ENCODE measurements at regions of chr19 and their contacts with region 1.

Region 1: DNA sequence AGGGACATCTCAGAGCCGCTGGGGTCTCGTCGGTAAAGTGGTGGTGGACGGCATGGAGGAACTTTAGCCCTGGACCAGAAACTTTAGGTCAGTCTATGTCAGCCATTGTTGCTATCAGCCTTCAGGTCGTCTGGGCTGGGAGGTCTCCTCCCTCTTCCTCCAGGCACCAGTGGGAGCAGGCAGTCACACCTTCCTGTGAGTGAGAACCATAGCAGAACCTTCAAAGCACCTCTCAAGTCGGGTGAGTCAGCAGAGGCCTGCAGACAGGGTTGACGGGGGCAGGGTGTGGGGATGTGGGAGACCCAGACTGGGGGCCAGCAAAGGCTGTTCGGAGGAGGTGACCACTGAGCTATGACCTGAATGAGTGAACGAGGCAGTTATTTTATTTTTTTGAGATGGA is 15.4 kb upstream of the SBNO2 start:
- DNase-seq: no peak
- H3K4me3 ChIP-seq: no peak overlapping the region
- H3K4me3 Mint-ChIP-seq: no peak overlapping the region
- H3K27ac Mint-ChIP-seq: no peak overlapping the region
- H3K4me1 ChIP-seq: peaks cover 7% of the 10 kb centered on the region
- H3K4me1 Mint-ChIP-seq: no peaks in the 10 kb centered on the region
- H3K27me3 ChIP-seq: no peaks in the 10 kb centered on the region
- H3K27me3 Mint-ChIP-seq: no peaks in the 10 kb centered on the region
- CTCF ChIP-seq: no peak

Region 2: DNA sequence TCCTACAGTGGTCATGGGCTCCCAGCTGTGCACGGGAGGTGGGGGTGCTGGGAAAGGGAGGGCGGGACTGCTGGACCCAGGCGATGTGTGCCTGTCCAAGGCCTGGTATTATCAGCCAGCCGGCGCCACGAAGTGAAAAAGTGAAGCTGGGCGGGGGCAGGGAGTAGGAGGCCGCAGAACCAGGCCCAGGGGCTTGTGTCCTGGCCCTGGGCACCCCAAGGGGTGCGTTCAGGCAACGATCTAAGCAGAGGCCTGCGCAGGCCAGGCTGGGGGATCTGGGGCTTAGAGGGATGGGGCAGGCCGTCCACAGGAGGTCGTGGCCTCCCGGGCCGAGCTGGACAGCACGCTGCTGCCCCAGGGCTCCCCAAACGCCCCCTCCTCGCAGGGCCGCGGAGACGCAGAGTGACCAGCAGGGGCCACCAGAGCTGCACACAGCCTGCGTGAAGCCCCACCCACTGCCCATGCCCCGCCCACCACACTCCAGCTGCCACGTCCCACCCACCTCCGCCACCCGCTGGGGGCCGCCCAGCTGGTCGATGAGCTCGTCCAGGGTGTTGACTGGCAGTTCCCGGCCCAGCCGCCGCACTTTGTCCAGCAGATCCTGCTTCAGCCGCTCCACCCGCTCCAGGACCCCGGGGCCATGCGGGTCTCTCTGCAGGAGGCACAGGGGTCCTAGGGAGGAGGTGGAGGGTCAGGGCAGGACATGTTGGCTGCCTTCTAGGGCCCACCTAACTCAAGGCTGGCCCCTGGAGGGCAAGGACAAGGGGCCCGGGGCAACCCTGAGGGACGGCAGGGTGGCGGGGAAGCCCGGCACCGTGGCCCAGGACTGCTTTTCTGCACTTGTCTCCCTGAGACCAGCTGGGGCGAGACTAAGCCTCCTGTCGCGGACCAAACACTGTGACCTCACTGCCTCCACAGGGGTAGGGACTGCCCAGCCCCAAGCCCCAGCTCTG is 76.1 kb before region 1 on chr19:
- CTCF ChIA-PET with region 1: interaction called, 7 read pairs
- POLR2A ChIA-PET with region 1: no interaction called
- intact Hi-C with region 1: loop called (anchors 5 kb)
- DNase-seq: peak; percentile 82
- H3K4me3 ChIP-seq: no peak overlapping the region
- H3K4me3 Mint-ChIP-seq: no peak overlapping the region
- H3K27ac Mint-ChIP-seq: no peak overlapping the region
- H3K4me1 ChIP-seq: peaks cover 5% of the 10 kb centered on the region; the same call in 1 of the 2 replicates
- H3K4me1 Mint-ChIP-seq: no peaks in the 10 kb centered on the region
- H3K27me3 ChIP-seq: no peaks in the 10 kb centered on the region
- H3K27me3 Mint-ChIP-seq: no peaks in the 10 kb centered on the region
- CTCF ChIP-seq: peak; percentile 56 to 64

Region 3: GRCh38 chr19:1223018-1223855 is 33.8 kb after region 1 on chr19:
- CTCF ChIA-PET with region 1: no interaction called
- POLR2A ChIA-PET with region 1: no interaction called
- intact Hi-C with region 1: no loop called
- DNase-seq: peak in 1 of 2 experiments; percentile 73
- H3K4me3 ChIP-seq: no peak overlapping the region
- H3K4me3 Mint-ChIP-seq: no peak overlapping the region
- H3K27ac Mint-ChIP-seq: no peak overlapping the region
- H3K4me1 ChIP-seq: no peaks in the 10 kb centered on the region
- H3K4me1 Mint-ChIP-seq: no peaks in the 10 kb centered on the region
- H3K27me3 ChIP-seq: no peaks in the 10 kb centered on the region
- H3K27me3 Mint-ChIP-seq: no peaks in the 10 kb centered on the region
- CTCF ChIP-seq: peak; percentile 31 to 71

Region 4: DNA sequence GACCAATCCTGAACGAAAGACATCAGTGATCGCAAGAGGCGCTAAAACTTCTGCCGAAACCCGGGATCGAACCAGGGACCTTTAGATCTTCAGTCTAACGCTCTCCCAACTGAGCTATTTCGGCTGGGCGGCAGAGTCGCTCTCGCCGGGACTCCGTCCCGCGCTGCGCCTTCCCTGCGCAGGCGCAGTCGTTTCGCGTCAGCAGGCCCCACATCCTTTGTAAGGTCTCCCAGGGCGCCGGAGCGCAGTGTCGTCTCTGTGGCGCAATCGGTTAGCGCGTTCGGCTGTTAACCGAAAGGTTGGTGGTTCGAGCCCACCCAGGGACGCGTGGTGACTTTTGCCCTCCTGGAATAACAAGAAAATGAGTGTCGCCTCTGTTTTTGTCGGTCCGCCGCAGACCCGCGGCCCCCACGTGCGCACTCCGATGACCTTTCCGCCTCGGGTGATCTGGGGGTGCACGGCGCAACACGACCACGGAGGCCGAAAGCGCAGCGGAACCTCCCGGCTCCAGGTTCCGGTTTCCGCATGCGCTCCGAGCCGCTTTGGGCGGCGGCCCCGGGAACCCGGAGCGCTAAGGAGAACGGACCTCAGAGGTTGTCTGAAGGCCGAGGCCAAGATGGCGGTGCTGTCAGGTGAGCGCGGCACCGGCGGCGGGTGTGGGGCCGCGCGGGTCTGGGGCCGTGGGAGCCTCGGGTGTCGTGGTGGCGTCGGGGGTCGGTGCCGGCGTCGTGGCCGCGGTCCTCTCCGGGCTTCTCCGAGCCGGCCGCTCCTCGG is 194.1 kb after region 1 on chr19 and contains the start of gene NDUFS7:
- CTCF ChIA-PET with region 1: no interaction called
- POLR2A ChIA-PET with region 1: no interaction called
- intact Hi-C with region 1: no loop called
- DNase-seq: peak; percentile 87 to 91
- H3K4me3 ChIP-seq: peak within 1 kb of the TSS; percentile 97
- H3K4me3 Mint-ChIP-seq: peak within 1 kb of the TSS; percentile 85
- H3K27ac Mint-ChIP-seq: peak within 1 kb of the TSS; percentile 99
- H3K4me1 ChIP-seq: 0 out of 2 replicates have a peak, but pooled peaks cover 3% of the 10 kb centered on the region
- H3K4me1 Mint-ChIP-seq: peaks cover 8% of the 10 kb centered on the region
- H3K27me3 ChIP-seq: no peaks in the 10 kb centered on the region
- H3K27me3 Mint-ChIP-seq: peaks cover 6% of the 10 kb centered on the region
- CTCF ChIP-seq: no peak
- total RNA-seq, gene NDUFS7: 111 and 114 TPM in 2 replicates